ENCODE measurements at regions of chr12 and their contacts with region 1.

Region 1: DNA sequence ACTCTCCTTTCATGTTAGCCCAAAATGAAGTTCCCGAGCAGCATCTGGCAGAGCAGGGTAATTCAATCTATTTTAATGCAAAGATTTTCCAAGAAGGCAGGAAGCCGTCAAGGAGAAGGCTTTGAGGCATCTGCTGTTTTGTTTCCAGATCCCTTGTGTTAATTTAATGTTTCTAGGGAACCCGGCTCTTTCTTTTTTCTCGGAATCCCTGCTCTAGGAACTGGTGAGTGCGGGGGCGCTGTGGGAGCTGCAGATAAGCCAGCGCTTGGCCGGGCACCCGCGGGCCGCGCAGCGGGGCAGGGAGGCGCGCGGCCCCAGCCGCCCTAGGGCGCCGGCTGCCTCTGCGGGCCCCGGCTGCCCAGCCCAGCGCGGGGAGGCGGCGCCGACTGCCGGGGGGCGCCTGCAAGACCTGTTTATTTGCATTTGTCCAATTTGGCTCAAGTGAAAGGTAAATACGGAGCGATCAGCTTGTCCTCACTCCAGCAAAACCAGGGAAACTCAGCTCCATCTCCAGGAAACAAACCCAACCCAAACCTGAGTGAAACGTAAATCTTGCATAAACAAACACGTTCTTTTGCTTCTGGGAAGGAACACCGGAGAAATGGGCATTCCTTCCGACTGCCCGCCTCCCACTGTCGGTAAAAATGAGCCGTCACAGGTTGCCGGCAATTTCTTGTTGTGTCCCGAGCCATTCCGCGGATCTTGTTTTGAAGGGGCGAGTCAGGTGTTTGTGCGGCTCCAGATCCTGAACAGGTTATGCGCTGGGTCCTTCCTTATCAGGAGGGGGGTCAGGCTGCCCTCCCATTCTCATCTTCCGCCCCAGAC is 65.1 kb downstream of the CRADD start:
- DNase-seq: peak; percentile 29
- ATAC-seq: peak; percentile 97
- H3K4me3 ChIP-seq: peak overlapping the region; percentile 64
- H3K27ac ChIP-seq: peak overlapping the region; percentile 41
- H3K4me1 ChIP-seq: peaks cover 7 to 26% of the 10 kb centered on the region in 2 experiments; a peak in 3 of 4 replicates
- H3K27me3 ChIP-seq: no peaks in the 10 kb centered on the region
- CTCF ChIP-seq: peak; percentile 11 to 36 (median 13); a peak in 3 of 6 replicates
- POLR2A ChIP-seq: no peak
- RAD21 ChIP-seq: peak; percentile 63

Region 2: DNA sequence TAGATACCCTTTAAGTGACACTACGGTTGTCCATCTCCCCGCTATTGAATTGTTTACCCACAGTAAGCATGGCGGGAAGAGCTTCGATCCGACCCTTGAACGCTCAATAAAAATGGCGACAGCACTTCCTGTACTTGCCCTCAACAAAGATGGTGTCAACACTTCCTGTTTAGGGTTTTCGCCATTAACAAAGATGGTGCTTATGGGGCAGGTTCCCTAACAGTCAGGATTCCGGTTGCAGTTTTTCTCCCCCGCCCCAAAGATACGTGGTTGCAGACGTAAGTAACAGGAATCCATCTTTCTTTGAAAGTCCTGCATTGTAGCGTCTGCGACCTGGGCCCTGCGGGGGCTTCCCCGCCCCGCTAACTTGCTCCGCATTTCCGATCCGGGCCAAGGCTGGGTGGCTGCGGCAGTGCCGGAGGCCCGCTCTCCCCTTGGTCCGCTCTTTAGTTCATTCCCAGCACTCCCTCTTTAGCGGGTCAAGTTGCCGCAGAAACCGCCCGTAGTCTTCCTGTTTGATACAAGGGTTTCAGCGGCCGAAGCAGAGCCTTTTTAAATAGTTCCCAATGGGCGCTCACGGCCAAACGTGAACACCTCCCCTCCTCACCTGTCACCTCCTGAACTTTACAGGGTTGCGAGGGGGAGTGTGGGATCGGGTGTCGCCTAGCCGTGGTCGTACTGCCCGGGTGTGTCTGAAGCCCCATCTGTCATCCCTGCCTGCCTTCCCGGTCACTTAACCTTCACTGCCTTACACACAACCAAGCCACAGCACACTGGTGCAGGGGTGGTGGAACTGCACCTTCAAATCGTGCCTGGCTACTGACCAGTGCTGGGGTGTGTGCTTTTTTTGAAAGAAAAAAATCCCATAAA is 64.9 kb before region 1 on chr12 and contains the start of gene CRADD:
- CTCF ChIA-PET with region 1: no interaction called
- POLR2A ChIA-PET with region 1: no interaction called
- RAD21 ChIA-PET with region 1: no interaction called
- intact Hi-C with region 1: loop called (anchors 5 kb)
- DNase-seq: peak; percentile 97
- ATAC-seq: peak; percentile 86
- H3K4me3 ChIP-seq: peak within 1 kb of the TSS; percentile 83
- H3K27ac ChIP-seq: peak within 1 kb of the TSS; percentile 87
- H3K4me1 ChIP-seq: peaks cover 7 to 17% of the 10 kb centered on the region in 2 experiments; a peak in 2 of 4 replicates
- H3K27me3 ChIP-seq: no peaks in the 10 kb centered on the region
- CTCF ChIP-seq: no peak
- POLR2A ChIP-seq: peak; percentile 79
- RAD21 ChIP-seq: 0 out of 2 replicates have a peak, but pooled peaks have one; percentile 27
- total RNA-seq, gene CRADD: 12.2 TPM

Region 3: DNA sequence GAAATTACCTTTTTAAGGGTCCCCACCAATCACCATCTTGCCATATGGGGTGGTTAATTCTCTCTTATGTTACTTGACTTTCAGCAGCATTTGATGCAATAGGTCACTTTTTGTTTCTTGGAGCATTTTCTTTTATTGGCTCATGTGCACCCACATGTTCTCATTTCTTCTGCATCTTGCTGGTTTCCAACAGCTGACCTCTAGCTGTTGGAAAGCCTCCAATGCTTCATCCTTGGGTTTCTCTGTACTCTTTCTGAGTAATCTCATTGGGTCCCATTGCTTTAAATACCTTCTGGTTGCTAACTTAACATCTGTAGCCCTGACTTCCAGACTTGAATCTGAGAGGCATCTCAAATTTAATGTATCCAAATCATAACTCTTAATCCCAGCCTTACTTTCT is 51.7 kb after region 1 on chr12:
- CTCF ChIA-PET with region 1: no interaction called
- POLR2A ChIA-PET with region 1: no interaction called
- RAD21 ChIA-PET with region 1: no interaction called
- intact Hi-C with region 1: no loop called
- DNase-seq: no peak
- ATAC-seq: no peak
- H3K4me3 ChIP-seq: no peak overlapping the region
- H3K27ac ChIP-seq: no peak overlapping the region
- H3K4me1 ChIP-seq: peaks cover 6 to 34% of the 10 kb centered on the region in 2 experiments
- H3K27me3 ChIP-seq: no peaks in the 10 kb centered on the region
- CTCF ChIP-seq: no peak
- POLR2A ChIP-seq: no peak
- RAD21 ChIP-seq: no peak

Region 4: GRCh38 chr12:93813972-93814821 is 71.9 kb after region 1 on chr12:
- CTCF ChIA-PET with region 1: no interaction called
- POLR2A ChIA-PET with region 1: no interaction called
- RAD21 ChIA-PET with region 1: no interaction called
- intact Hi-C with region 1: no loop called
- DNase-seq: no peak
- ATAC-seq: no peak
- H3K4me3 ChIP-seq: no peak overlapping the region
- H3K27ac ChIP-seq: no peak overlapping the region
- H3K4me1 ChIP-seq: peaks cover 0 to 8% of the 10 kb centered on the region in 2 experiments; a peak in 1 of 4 replicates
- H3K27me3 ChIP-seq: no peaks in the 10 kb centered on the region
- CTCF ChIP-seq: no peak
- POLR2A ChIP-seq: no peak
- RAD21 ChIP-seq: no peak

Measured in HCT116 (cell line).